MCF 10A (cell line): ENCODE measurements at regions of chr4 and their contacts with region 1.

Region 1: GRCh38 chr4:87014284-87014782 is 79.5 kb downstream of the AFF1 start:
- DNase-seq: no peak
- H3K4me3 Mint-ChIP-seq: peak overlapping the region; percentile 25
- H3K27ac Mint-ChIP-seq: peak overlapping the region; percentile 82
- H3K4me1 Mint-ChIP-seq: peaks cover 44% of the 10 kb centered on the region
- H3K27me3 Mint-ChIP-seq: no peaks in the 10 kb centered on the region
- CTCF ChIP-seq: no peak

Region 2: DNA sequence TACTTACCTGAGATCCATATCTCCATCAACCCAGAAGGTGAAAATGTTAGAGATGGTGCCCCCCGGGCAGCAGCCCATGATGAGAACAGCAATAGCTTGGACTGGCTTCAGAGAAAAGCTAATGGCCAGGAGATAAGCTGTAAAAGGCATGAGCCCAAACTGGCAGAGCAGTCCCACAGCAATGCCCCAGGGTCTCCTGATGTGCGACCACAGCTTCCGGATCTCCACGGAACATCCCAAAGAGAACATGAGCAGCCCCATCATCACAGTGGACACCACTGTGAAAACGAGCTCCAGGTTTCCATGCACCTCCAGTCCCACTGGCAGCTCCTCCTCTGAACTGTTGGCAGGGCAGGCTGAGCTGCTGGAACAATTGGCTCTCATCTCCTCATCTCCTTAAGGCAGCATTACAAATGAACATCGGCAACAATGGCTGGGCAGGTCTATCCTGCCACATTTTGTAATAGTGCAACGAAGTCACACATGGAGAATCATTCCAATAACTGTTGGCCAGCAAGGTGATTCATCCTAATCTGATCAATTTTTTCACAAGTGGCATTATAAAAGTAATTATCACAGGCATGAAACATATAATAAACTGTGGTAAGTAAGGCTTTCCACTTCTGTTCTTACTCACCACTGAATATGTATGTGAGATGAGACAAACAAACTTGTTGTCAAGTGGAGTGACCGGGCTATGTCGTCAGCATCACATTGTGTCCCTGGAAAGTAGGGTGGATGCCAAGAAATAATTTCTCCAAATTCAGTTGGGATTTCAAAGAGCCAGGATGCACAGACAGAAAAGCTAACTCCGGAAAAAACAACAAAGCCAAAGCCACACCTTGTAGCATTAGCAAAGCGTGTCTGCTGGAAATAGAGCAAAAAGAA is 165.4 kb before region 1 on chr4 and contains the start of gene SLC10A6:
- CTCF ChIA-PET with region 1: no interaction called
- POLR2A ChIA-PET with region 1: no interaction called
- intact Hi-C with region 1: no loop called
- DNase-seq: peak; percentile 13
- H3K4me3 Mint-ChIP-seq: peak within 1 kb of the TSS; percentile 38
- H3K27ac Mint-ChIP-seq: peak within 1 kb of the TSS; percentile 75
- H3K4me1 Mint-ChIP-seq: peaks cover 28% of the 10 kb centered on the region
- H3K27me3 Mint-ChIP-seq: no peaks in the 10 kb centered on the region
- CTCF ChIP-seq: no peak
- total RNA-seq, gene SLC10A6: not detected in 2 replicates

Region 3: GRCh38 chr4:87032884-87033533 is 18.7 kb after region 1 on chr4:
- CTCF ChIA-PET with region 1: no interaction called
- POLR2A ChIA-PET with region 1: interaction called, 16 read pairs
- intact Hi-C with region 1: no loop called
- DNase-seq: peak; percentile 67
- H3K4me3 Mint-ChIP-seq: no peak overlapping the region
- H3K27ac Mint-ChIP-seq: no peak overlapping the region
- H3K4me1 Mint-ChIP-seq: peaks cover 13% of the 10 kb centered on the region
- H3K27me3 Mint-ChIP-seq: no peaks in the 10 kb centered on the region
- CTCF ChIP-seq: no peak